ENCODE measurements at regions of chr6 and their contacts with region 1.

Region 1: GRCh38 chr6:39166189-39166911 is 51.4 kb upstream of the SAYSD1 start:
- DNase-seq: peak; percentile 85
- ATAC-seq: peak; percentile 78
- H3K4me3 ChIP-seq: no peak overlapping the region
- H3K27ac ChIP-seq: no peak overlapping the region
- H3K4me1 ChIP-seq: peaks cover 26% of the 10 kb centered on the region
- H3K27me3 ChIP-seq: peaks cover 22% of the 10 kb centered on the region; the same call in 1 of the 2 replicates
- CTCF ChIP-seq: peak; percentile 93

Region 2: GRCh38 chr6:39182604-39183003 is 16.3 kb after region 1 on chr6:
- CTCF ChIA-PET with region 1: no interaction called
- POLR2A ChIA-PET with region 1: no interaction called
- intact Hi-C with region 1: no loop called
- DNase-seq: no peak
- ATAC-seq: no peak
- H3K4me3 ChIP-seq: no peak overlapping the region
- H3K27ac ChIP-seq: no peak overlapping the region
- H3K4me1 ChIP-seq: peaks cover 14% of the 10 kb centered on the region
- H3K27me3 ChIP-seq: no peaks in the 10 kb centered on the region
- CTCF ChIP-seq: no peak

Region 3: DNA sequence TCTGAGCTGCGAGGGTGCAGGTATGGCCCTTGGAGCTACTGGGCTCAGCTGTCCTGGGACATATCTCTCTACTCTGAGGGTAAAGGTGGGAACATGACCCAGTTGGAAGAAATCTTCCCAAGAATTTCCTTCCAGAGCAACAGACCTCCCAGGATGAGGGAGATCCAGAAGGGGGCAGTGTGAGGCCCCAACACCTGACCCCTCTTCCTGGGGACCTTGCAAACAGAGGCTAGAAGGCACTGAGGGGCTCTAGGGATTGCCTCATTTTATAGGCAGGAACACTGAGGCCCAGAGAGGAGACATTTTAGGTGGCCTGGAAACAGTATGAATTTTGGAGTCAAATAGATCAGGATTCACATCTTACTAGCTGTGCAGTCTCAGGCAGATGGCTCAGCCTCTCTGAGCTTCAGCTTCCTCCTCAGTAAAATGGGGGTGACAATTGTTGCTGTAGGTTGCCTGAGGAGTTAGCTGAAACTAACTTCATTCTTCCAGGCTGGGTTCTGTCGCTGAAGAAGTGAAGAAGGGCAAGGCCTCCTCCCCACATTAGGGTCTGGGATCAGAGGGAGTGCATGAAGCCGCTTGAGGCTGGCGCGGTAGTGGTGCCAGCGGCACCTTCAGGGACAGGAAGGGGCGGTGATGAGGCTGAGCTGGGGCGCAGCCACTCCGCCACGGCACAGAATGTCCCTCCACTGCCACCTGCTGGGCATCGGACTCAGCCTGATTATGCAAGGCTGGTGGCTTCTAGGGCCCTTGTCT is 136.5 kb after region 1 on chr6:
- CTCF ChIA-PET with region 1: interaction called, 3 read pairs
- POLR2A ChIA-PET with region 1: no interaction called
- intact Hi-C with region 1: loop called (anchors 1 kb)
- DNase-seq: peak; percentile 86
- ATAC-seq: peak; percentile 98
- H3K4me3 ChIP-seq: no peak overlapping the region
- H3K27ac ChIP-seq: no peak overlapping the region
- H3K4me1 ChIP-seq: 0 out of 2 replicates have a peak, but pooled peaks cover 2% of the 10 kb centered on the region
- H3K27me3 ChIP-seq: peaks cover 24% of the 10 kb centered on the region
- CTCF ChIP-seq: peak; percentile 89